ENCODE measurements at regions of chr12 and their contacts with region 1.

Region 1: DNA sequence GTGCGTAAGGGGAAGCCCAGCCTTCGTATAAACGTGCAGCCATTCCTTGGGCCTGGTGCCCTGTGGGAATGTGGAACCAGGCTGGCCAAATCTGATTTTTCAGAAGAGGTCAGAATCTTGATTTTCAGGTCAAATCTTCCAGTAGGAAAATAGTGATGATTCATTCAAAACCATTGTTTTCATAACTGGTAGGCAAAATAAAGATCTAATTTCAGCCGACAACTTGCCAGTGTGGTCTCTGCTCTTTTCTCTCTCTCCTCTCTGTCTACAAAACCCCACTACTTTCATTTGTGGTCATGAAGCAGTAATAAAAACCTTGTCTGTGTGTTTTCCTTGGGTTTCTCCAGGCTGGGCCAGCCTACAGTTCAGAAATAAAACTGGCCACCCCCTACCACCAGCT is 135.1 kb downstream of the RBM19 start:
- DNase-seq: no peak
- H3K4me3 ChIP-seq: no peak overlapping the region
- H3K27ac ChIP-seq: no peak overlapping the region
- H3K4me1 ChIP-seq: no peaks in the 10 kb centered on the region
- H3K27me3 ChIP-seq: no peaks in the 10 kb centered on the region
- CTCF ChIP-seq: no peak

Region 2: DNA sequence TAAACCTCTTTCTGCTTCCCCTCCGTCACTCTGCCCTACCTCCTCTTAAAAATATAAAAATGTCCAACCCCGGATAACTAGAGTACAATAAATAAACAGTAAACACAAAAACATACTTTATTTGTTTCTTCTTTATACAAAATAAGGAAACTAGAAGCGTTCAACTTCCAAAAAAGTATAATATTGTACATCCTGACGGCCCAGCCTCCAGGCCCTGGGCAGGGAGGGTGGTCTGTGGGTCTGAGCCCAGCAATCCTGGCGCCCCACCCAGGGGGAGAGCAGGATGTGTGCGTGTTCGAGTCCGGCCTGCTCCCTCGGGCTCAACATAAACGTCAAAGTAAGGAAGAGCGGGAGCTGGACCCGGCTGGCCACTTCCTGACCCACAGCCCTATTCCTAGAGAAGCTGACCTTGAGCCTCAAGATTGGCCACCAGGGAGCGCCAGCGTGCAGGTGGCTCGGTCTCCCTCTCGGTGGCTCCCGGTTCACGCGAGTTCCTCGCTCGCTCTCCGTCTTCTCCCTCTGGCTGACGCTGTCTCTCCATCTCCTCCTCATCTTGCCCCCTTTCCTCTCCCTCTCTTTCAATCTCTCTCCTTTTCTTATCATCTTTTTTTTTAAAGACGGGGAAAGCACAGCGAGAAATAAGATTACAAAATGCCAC is 368.8 kb before region 1 on chr12:
- CTCF ChIA-PET with region 1: no interaction called
- dilution Hi-C with region 1: no loop called
- in situ Hi-C with region 1: no loop called
- intact Hi-C with region 1: loop called (anchors 5 kb)
- DNase-seq: peak; percentile 57
- H3K4me3 ChIP-seq: peak overlapping the region in 2 of 3 experiments; percentile 27 to 31
- H3K27ac ChIP-seq: no peak overlapping the region
- H3K4me1 ChIP-seq: peaks cover 11% of the 10 kb centered on the region
- H3K27me3 ChIP-seq: peaks cover 49% of the 10 kb centered on the region
- CTCF ChIP-seq: peak; percentile 71 to 92

Region 3: GRCh38 chr12:113727651-113728061 is 103.4 kb before region 1 on chr12:
- CTCF ChIA-PET with region 1: no interaction called
- dilution Hi-C with region 1: loop called (anchors 5 kb)
- in situ Hi-C with region 1: no loop called
- intact Hi-C with region 1: no loop called
- DNase-seq: peak; percentile 22
- H3K4me3 ChIP-seq: no peak overlapping the region
- H3K27ac ChIP-seq: no peak overlapping the region
- H3K4me1 ChIP-seq: no peaks in the 10 kb centered on the region
- H3K27me3 ChIP-seq: no peaks in the 10 kb centered on the region
- CTCF ChIP-seq: no peak

Region 4: DNA sequence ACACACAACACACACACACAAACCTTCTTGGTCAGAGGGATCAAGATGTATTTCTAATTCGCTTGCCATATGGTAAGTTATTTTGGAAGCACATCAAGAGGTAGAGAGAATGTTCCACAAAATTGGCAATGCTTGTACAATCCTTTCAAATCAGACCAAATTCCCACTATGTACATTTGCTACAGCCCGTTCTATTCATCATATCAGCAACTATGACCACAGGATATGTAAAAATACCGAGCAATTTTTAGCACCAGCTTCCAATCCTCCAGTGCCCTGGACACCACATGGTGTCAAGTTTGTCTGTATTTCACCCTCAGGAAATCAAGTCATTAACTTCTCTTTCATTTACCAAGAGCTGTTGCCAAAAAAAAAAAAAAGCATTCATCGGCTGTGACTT is 553.7 kb after region 1 on chr12:
- CTCF ChIA-PET with region 1: no interaction called
- dilution Hi-C with region 1: no loop called
- in situ Hi-C with region 1: no loop called
- intact Hi-C with region 1: no loop called
- DNase-seq: no peak
- H3K4me3 ChIP-seq: no peak overlapping the region
- H3K27ac ChIP-seq: no peak overlapping the region
- H3K4me1 ChIP-seq: no peaks in the 10 kb centered on the region
- H3K27me3 ChIP-seq: no peaks in the 10 kb centered on the region
- CTCF ChIP-seq: no peak

Measured in mammary epithelial cell (primary cell).